ENCODE measurements at regions of chr22 and their contacts with region 1.

Region 1: DNA sequence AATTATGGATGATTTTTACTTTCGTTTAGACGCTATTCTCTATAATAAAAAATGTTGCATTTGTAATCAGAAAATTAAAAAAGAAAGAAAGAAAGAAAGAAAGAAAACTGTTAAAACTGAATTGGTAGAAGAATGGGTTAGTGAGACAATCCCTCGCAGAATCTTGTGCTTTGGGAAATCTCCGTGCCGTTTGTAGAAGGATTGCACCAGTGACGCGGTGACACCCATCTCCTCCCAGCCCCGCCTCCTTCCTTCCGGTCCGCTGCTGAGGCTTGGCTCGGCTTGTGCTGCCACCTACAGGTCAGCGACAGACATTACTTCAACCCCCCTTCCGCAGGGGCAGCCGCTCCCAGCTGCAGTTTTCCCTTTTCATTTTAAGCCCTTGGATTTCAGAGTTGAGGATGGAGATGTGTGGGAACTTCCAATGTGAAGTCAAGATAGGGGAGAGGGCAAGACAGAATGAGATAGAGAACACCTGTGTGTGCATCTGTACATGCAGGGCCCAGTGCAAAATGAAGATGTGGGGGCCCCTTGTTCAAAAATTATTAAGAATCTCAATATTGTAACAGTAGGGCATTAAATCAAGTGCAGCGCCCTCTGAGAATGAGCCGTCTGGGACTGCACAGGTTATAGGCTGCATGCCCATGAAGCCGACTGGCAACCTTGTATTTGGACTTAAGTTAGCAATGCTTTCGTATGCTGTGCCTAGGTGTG is 41.1 kb downstream of the TST start:
- DNase-seq: peak; percentile 94
- H3K4me3 ChIP-seq: peak overlapping the region; percentile 11 to 57 (median 31)
- H3K27ac ChIP-seq: peak overlapping the region; percentile 34 to 76 (median 56)
- H3K4me1 ChIP-seq: peaks cover 0 to 8% (median 3%) of the 10 kb centered on the region in 4 donors
- H3K27me3 ChIP-seq: peaks cover 4% of the 10 kb centered on the region
- CTCF ChIP-seq: peak; percentile 84 to 96 (median 93)
- EP300 ChIP-seq: no peak
- POLR2A ChIP-seq: no peak

Region 2: GRCh38 chr22:36775964-36776669 is 202.0 kb before region 1 on chr22 and contains the start of gene IFT27:
- in situ Hi-C with region 1: loop called (anchors 10 kb)
- intact Hi-C with region 1: loop called (anchors 5 kb)
- DNase-seq: peak; percentile 99
- H3K4me3 ChIP-seq: peak within 1 kb of the TSS; percentile 72 to 99 (median 88)
- H3K27ac ChIP-seq: peak within 1 kb of the TSS; percentile 82 to 96 (median 92)
- H3K4me1 ChIP-seq: peaks cover 8 to 11% (median 10%) of the 10 kb centered on the region in 4 donors
- H3K27me3 ChIP-seq: no peaks in the 10 kb centered on the region
- CTCF ChIP-seq: no peak
- EP300 ChIP-seq: no peak
- POLR2A ChIP-seq: peak; percentile 54
- total RNA-seq, gene IFT27: 5.8 to 22.7 (median 12.9) TPM

Region 3: DNA sequence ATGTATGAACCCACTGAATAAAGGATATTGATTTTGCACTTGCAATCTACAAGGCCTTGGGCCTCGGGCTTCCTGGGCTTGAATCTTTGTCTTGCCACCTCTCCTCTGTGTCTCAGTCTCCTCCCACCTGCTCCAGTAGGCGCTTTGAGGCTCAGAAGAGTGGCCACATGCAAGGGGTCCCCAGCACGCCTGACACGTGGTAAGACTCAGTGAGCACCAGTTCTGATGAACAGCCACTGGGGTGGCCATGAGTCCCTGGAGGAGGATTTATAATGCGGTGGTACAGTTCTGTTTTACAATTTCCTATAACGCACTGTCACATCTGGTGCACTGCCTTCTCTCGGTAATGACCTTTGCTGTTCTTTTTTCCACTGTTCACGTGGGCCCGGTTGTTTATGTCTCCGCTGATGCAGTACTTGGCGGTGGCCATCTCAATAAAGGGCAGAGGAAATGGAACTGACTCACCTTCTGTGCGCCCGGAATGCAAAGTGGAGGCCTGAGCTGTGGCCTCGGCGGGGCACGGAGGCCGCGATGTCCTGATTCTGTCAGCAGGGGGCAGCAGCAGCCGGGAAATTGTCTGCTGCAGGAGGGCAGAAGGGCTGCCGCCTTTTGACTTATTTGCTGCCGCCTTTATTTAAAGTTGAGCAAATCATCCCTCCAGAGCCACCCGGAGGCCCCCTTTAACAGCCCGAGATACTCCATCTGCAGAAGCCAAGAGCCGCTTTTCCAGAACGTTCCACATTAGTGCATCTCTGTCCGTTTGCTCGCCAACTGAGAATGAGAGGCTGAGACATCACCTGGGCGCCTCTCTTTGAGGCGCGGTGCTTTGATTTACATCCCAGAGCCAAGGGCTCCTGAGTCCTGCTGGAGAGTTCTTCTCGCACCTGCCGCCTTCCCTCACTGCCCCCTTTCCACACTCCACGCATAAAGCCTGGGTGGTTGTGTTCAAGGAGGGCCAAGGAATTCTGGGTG is 196.2 kb before region 1 on chr22:
- in situ Hi-C with region 1: loop called (anchors 10 kb)
- intact Hi-C with region 1: loop called (anchors 5 kb)
- DNase-seq: peak; percentile 88
- H3K4me3 ChIP-seq: no peak overlapping the region
- H3K27ac ChIP-seq: peak overlapping the region in 3 of 4 donors; percentile 33 to 64 (median 59)
- H3K4me1 ChIP-seq: peaks cover 0 to 11% (median 4%) of the 10 kb centered on the region in 4 donors
- H3K27me3 ChIP-seq: peaks cover 2% of the 10 kb centered on the region
- CTCF ChIP-seq: peak; percentile 91 to 94 (median 93)
- EP300 ChIP-seq: no peak
- POLR2A ChIP-seq: no peak

Region 4: GRCh38 chr22:36856121-36856791 is 121.8 kb before region 1 on chr22:
- in situ Hi-C with region 1: loop called in 2 of 4 experiments (anchors 10 to 25 kb)
- intact Hi-C with region 1: no loop called
- DNase-seq: peak; percentile 95
- H3K4me3 ChIP-seq: no peak overlapping the region
- H3K27ac ChIP-seq: no peak overlapping the region
- H3K4me1 ChIP-seq: peaks cover 0 to 6% (median 0%) of the 10 kb centered on the region in 4 donors
- H3K27me3 ChIP-seq: no peaks in the 10 kb centered on the region
- CTCF ChIP-seq: peak; percentile 100
- EP300 ChIP-seq: no peak
- POLR2A ChIP-seq: no peak

Region 5: DNA sequence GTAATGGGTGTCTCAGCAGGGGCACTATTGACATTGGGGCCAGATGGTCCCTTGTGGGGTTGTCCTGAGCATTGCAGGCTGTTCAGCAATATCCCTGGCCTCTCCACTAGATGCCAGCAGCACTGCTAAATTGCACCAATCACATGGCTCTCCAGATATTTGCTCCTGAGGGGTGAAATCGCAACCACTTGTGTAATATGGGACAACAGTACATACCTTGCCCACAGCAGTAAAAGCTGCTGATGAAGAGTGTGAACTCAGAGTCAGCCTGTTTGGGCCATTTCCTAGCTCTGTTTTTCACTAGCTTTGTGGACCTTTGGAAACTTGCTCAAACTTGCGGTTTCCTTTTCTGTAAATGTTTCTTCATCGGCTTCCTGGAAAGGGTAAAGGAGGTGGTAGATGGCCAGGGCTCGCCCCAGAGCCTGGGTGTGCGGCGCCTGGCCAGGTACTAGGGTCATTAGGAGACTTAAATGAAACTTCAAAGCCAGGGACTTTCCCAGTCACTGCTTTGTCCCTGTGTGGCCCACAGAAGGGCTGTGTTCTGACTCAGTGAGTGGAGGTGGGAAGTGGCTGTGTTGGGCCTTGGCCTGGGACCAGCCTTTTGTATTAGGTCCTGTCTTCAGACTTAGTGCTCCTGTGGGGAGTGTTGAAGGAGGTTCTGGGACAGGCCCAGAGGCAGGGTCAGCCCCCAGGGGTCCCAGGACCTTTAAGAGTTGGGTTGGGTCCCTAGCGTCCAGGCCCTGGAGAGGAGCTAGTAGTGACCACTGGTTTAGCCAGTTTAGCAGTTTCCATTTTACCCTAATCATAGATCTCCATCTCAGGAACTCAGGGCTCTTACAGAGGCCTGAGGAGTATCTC is 104.2 kb before region 1 on chr22:
- in situ Hi-C with region 1: loop called in 2 of 4 experiments (anchors 10 to 25 kb)
- intact Hi-C with region 1: loop called (anchors 5 kb)
- DNase-seq: peak; percentile 57
- H3K4me3 ChIP-seq: no peak overlapping the region
- H3K27ac ChIP-seq: peak overlapping the region; percentile 24 to 76 (median 62)
- H3K4me1 ChIP-seq: peaks cover 0 to 12% (median 6%) of the 10 kb centered on the region in 4 donors
- H3K27me3 ChIP-seq: no peaks in the 10 kb centered on the region
- CTCF ChIP-seq: peak; percentile 33 to 59 (median 38)
- EP300 ChIP-seq: no peak
- POLR2A ChIP-seq: no peak

Region 6: GRCh38 chr22:37109242-37109917 is 131.3 kb after region 1 on chr22 and contains the start of gene TMPRSS6:
- in situ Hi-C with region 1: no loop called
- intact Hi-C with region 1: no loop called
- DNase-seq: no peak
- H3K4me3 ChIP-seq: no peak within 1 kb of the TSS
- H3K27ac ChIP-seq: no peak within 1 kb of the TSS
- H3K4me1 ChIP-seq: no peaks in the 10 kb centered on the region
- H3K27me3 ChIP-seq: peaks cover under 1% of the 10 kb centered on the region
- CTCF ChIP-seq: no peak
- EP300 ChIP-seq: no peak
- POLR2A ChIP-seq: no peak
- total RNA-seq, gene TMPRSS6: 0.16 to 4.9 (median 0.41) TPM in 3 of 4 donors, not detected in the other